ENCODE measurements at regions of chr22 and their contacts with region 1.

Region 1: GRCh38 chr22:30116362-30117117 is 36.3 kb downstream of the HORMAD2 start:
- DNase-seq: no peak
- ATAC-seq: no peak
- H3K4me3 ChIP-seq: no peak overlapping the region
- H3K27ac ChIP-seq: no peak overlapping the region
- H3K4me1 ChIP-seq: no peaks in the 10 kb centered on the region
- H3K27me3 ChIP-seq: no peaks in the 10 kb centered on the region
- CTCF ChIP-seq: no peak
- EP300 ChIP-seq: no peak
- POLR2A ChIP-seq: no peak
- RAD21 ChIP-seq: no peak

Region 2: GRCh38 chr22:30253205-30253852 is 136.8 kb after region 1 on chr22:
- CTCF ChIA-PET with region 1: interaction called, 19 read pairs
- POLR2A ChIA-PET with region 1: no interaction called
- RAD21 ChIA-PET with region 1: interaction called, 8 read pairs
- SMC1A ChIA-PET with region 1: interaction called, 3 read pairs
- in situ Hi-C with region 1: no loop called
- intact Hi-C with region 1: no loop called
- DNase-seq: no peak
- ATAC-seq: peak; percentile 30
- H3K4me3 ChIP-seq: no peak overlapping the region
- H3K27ac ChIP-seq: no peak overlapping the region
- H3K4me1 ChIP-seq: peaks cover 10% of the 10 kb centered on the region
- H3K27me3 ChIP-seq: no peaks in the 10 kb centered on the region; a peak in 1 of 4 replicates
- CTCF ChIP-seq: no peak
- EP300 ChIP-seq: no peak
- POLR2A ChIP-seq: no peak
- RAD21 ChIP-seq: no peak